B cell (primary cell): ENCODE measurements at regions of chr9 and their contacts with region 1.

Region 1: GRCh38 chr9:32378993-32379729 is 5.3 kb upstream of the ACO1 start:
- DNase-seq: peak; percentile 80
- ATAC-seq: peak; percentile 81
- H3K4me3 ChIP-seq: no peak overlapping the region
- H3K4me3 Mint-ChIP-seq: no peak overlapping the region
- H3K27ac ChIP-seq: no peak overlapping the region
- H3K27ac Mint-ChIP-seq: no peak overlapping the region
- H3K4me1 ChIP-seq: peaks cover 6 to 17% of the 10 kb centered on the region in 2 donors
- H3K4me1 Mint-ChIP-seq: peaks cover 13% of the 10 kb centered on the region
- H3K27me3 ChIP-seq: peaks cover 0 to 29% (median 20%) of the 10 kb centered on the region in 4 experiments
- H3K27me3 Mint-ChIP-seq: peaks cover 35% of the 10 kb centered on the region
- CTCF ChIP-seq: peak; percentile 83

Region 2: DNA sequence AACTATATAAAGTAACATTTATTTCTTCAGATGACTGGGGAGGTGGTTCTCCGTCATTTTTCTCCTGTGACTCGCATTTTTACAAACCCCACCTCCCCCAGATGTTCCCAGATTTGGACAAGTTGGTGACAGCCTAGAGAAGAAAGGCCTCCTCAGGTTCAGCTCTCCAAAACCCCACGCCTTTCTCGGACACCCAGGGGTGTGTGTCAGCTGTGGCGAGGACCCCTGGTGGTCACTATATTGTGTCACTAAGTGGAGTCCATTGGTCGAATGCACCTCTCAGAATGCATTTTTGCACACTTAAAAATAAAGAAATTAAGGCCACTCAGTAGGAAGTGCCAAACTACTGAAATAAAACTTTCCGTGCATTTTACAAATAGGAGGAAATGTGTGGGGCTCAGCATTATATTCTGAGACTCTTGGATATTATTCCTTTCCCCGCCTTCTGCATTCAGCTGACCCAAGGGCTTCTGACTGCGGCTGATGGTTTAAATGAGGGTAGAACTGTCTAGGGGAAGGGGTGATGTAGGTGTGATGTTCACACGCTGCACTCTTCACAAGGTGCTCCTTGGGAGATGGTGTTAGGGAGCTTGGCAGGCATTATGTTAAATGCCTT is 52.9 kb after region 1 on chr9:
- CTCF ChIA-PET with region 1: interaction called, 128 read pairs
- POLR2A ChIA-PET with region 1: no interaction called
- intact Hi-C with region 1: loop called (anchors 1 kb)
- DNase-seq: peak; percentile 44
- ATAC-seq: peak; percentile 49
- H3K4me3 ChIP-seq: no peak overlapping the region
- H3K4me3 Mint-ChIP-seq: no peak overlapping the region
- H3K27ac ChIP-seq: no peak overlapping the region
- H3K27ac Mint-ChIP-seq: no peak overlapping the region
- H3K4me1 ChIP-seq: no peaks in the 10 kb centered on the region
- H3K4me1 Mint-ChIP-seq: no peaks in the 10 kb centered on the region
- H3K27me3 ChIP-seq: no peaks in the 10 kb centered on the region
- H3K27me3 Mint-ChIP-seq: no peaks in the 10 kb centered on the region
- CTCF ChIP-seq: peak; percentile 49

Region 3: GRCh38 chr9:32526041-32526706 is 147.0 kb after region 1 on chr9 and contains the start of gene RIGI:
- CTCF ChIA-PET with region 1: interaction called, 48 read pairs
- POLR2A ChIA-PET with region 1: interaction called, 12 read pairs
- intact Hi-C with region 1: loop called (anchors 1 kb)
- DNase-seq: peak; percentile 82
- ATAC-seq: peak; percentile 78
- H3K4me3 ChIP-seq: peak within 1 kb of the TSS; percentile 73 to 98 (median 84)
- H3K4me3 Mint-ChIP-seq: peak within 1 kb of the TSS; percentile 95
- H3K27ac ChIP-seq: peak within 1 kb of the TSS; percentile 73 to 74
- H3K27ac Mint-ChIP-seq: peak within 1 kb of the TSS; percentile 93
- H3K4me1 ChIP-seq: peaks cover 27 to 31% of the 10 kb centered on the region in 2 donors
- H3K4me1 Mint-ChIP-seq: peaks cover 54% of the 10 kb centered on the region
- H3K27me3 ChIP-seq: no peaks in the 10 kb centered on the region
- H3K27me3 Mint-ChIP-seq: no peaks in the 10 kb centered on the region
- CTCF ChIP-seq: peak; percentile 59
- total RNA-seq, gene RIGI: 24.9 and 26.3 TPM in 2 replicates

Region 4: DNA sequence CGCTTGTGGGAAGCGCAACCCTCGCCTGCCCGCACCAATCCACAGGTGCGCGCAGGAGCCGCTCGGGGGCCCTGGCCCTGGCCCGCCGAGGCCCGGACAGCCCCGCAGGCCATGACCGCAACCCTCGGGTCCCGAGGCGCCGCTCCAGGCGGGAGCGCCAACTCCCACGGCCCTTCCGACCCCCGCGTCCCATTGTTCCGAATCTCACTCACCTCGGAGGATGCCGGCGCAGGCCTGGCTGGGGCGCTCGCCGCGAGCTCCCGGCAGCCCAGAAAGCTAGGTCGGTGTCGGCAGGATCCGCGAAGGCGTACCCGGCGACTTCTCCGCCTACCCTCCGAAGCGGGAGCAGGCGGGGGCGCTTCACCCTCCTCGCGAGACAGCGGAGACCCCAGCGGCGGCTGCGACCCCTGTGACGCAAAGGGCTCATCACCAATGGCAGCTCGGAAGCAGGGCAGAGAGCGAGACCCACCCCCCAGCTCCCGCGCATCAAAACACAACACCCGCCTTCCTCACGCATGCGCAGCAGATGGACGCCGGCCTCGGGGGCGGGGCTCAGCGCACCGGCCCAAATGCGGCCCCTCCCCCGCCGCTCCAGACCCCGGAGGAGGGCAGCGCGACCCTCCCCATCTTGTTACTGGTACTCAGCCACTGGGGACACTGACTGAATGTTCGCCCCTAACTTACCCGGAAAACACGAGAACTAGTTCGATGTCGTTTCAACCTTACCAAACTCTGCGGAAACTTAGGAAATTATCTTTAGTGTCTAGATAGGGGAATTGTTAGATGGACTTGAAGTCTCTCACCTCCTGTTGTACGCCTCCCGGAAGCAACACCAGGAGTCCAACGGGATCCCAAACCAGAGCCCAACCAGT is 171.6 kb after region 1 on chr9:
- CTCF ChIA-PET with region 1: interaction called, 30 read pairs
- POLR2A ChIA-PET with region 1: interaction called, 4 read pairs
- intact Hi-C with region 1: loop called (anchors 1 kb)
- DNase-seq: peak; percentile 97
- ATAC-seq: peak; percentile 84
- H3K4me3 ChIP-seq: peak overlapping the region; percentile 86 to 98 (median 87)
- H3K4me3 Mint-ChIP-seq: peak overlapping the region; percentile 91
- H3K27ac ChIP-seq: peak overlapping the region; percentile 89 to 92
- H3K27ac Mint-ChIP-seq: peak overlapping the region; percentile 91
- H3K4me1 ChIP-seq: peaks cover 14 to 15% of the 10 kb centered on the region in 2 donors
- H3K4me1 Mint-ChIP-seq: peaks cover 34% of the 10 kb centered on the region
- H3K27me3 ChIP-seq: no peaks in the 10 kb centered on the region
- H3K27me3 Mint-ChIP-seq: no peaks in the 10 kb centered on the region
- CTCF ChIP-seq: peak; percentile 5

Region 5: GRCh38 chr9:32968101-32969011 is 589.2 kb after region 1 on chr9:
- CTCF ChIA-PET with region 1: interaction called, 97 read pairs
- POLR2A ChIA-PET with region 1: no interaction called
- intact Hi-C with region 1: no loop called
- DNase-seq: peak; percentile 62
- ATAC-seq: no peak
- H3K4me3 ChIP-seq: no peak overlapping the region
- H3K4me3 Mint-ChIP-seq: no peak overlapping the region
- H3K27ac ChIP-seq: no peak overlapping the region
- H3K27ac Mint-ChIP-seq: no peak overlapping the region
- H3K4me1 ChIP-seq: no peaks in the 10 kb centered on the region
- H3K4me1 Mint-ChIP-seq: no peaks in the 10 kb centered on the region
- H3K27me3 ChIP-seq: no peaks in the 10 kb centered on the region
- H3K27me3 Mint-ChIP-seq: no peaks in the 10 kb centered on the region
- CTCF ChIP-seq: peak; percentile 92